ENCODE measurements at regions of chr1 and their contacts with region 1.

Region 1: GRCh38 chr1:110460253-110461220 is 9.6 kb downstream of the PROK1 start:
- DNase-seq: peak; percentile 83
- H3K4me3 ChIP-seq: peak overlapping the region in 1 of 2 experiments; percentile 26; a peak in 1 of 4 replicates
- H3K27ac ChIP-seq: no peak overlapping the region
- H3K4me1 ChIP-seq: 0 out of 4 replicates have a peak, but pooled peaks cover 0 to 6% of the 10 kb centered on the region in 2 experiments
- H3K27me3 ChIP-seq: no peaks in the 10 kb centered on the region
- CTCF ChIP-seq: peak; percentile 94
- EP300 ChIP-seq: no peak
- RAD21 ChIP-seq: peak; percentile 99

Region 2: DNA sequence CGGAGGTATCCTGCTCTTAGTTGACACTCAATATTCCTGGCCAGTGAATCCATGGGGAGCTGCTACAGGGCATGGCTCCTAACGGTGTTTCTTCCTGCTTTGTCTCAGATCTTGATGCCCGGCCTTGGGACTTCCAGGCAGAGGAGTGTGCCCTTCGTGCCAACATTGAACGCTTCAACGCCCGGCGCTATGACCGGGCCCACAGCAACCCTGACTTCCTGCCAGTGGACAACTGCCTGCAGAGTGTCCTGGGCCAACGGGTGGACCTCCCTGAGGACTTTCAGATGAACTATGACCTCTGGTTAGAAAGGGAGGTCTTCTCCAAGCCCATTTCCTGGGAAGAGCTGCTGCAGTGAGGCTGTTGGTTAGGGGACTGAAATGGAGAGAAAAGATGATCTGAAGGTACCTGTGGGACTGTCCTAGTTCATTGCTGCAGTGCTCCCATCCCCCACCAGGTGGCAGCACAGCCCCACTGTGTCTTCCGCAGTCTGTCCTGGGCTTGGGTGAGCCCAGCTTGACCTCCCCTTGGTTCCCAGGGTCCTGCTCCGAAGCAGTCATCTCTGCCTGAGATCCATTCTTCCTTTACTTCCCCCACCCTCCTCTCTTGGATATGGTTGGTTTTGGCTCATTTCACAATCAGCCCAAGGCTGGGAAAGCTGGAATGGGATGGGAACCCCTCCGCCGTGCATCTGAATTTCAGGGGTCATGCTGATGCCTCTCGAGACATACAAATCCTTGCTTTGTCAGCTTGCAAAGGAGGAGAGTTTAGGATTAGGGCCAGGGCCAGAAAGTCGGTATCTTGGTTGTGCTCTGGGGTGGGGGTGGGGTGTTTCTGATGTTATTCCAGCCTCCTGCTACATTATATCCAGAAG is 406.7 kb before region 1 on chr1:
- CTCF ChIA-PET with region 1: interaction called, 17 read pairs
- POLR2A ChIA-PET with region 1: no interaction called
- DNase-seq: peak; percentile 71
- H3K4me3 ChIP-seq: no peak overlapping the region; a peak in 1 of 4 replicates
- H3K27ac ChIP-seq: peak overlapping the region in 1 of 2 experiments; percentile 93; a peak in 2 of 4 replicates
- H3K4me1 ChIP-seq: peaks cover 60 to 79% of the 10 kb centered on the region in 2 experiments
- H3K27me3 ChIP-seq: no peaks in the 10 kb centered on the region
- CTCF ChIP-seq: peak; percentile 96
- EP300 ChIP-seq: no peak
- RAD21 ChIP-seq: peak; percentile 98

Region 3: DNA sequence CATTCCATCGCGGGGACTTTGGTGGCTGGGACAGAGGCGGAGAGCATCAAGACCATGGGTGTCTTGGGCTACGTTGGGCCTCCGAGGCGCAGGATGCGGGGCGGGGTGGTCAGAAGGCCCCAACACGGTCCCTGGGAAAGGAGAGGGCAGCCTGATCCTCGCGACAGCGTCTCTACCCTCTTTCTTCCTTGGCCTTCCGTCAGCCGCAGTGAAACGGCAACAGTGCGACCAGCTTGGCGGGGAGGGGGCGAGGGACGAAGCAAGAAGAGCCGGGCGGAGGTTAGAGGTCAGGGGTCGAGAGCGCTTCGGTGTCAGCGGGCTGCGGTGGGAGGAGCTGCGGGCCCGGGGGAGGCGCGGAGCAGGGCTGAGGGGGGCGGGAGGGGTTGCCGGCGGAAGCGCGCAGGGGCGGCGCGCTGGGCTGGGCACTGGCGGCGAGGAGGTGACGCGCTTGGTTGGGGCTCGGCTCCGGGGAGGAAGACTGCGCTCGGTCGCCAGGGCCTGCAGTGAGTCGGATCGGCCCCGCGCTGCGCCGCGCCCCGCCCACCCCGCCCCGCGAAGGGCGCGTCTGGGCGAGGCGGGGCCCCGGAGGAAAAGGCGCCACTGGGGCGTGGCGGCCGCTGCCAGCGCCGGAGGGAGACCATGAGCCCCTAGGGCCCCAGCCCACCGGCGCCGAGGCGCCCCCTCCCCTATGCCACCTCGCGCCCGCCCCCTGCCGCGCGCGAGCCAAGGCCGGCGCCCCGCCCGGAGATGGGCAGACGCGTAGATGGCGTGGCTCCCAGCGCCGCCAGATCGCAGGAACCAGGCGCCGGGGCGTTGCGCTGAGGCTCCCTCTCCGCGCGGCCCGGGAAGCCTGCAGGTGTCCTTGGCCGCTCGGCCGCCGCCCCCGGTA is 250.6 kb before region 1 on chr1 and contains the start of gene KCNC4:
- CTCF ChIA-PET with region 1: interaction called, 139 read pairs
- POLR2A ChIA-PET with region 1: no interaction called
- DNase-seq: peak; percentile 88
- H3K4me3 ChIP-seq: peak within 1 kb of the TSS; percentile 54
- H3K27ac ChIP-seq: no peak within 1 kb of the TSS; a peak in 1 of 4 replicates
- H3K4me1 ChIP-seq: peaks cover 0 to 57% of the 10 kb centered on the region in 2 experiments; a peak in 2 of 4 replicates
- H3K27me3 ChIP-seq: peaks cover 23% of the 10 kb centered on the region
- CTCF ChIP-seq: no peak
- EP300 ChIP-seq: no peak
- RAD21 ChIP-seq: no peak
- polyA plus RNA-seq, gene KCNC4: 0.37 and 0.51 TPM in 2 replicates

Region 4: GRCh38 chr1:110338886-110339406 is 121.6 kb before region 1 on chr1 and contains the start of gene RBM15:
- CTCF ChIA-PET with region 1: interaction called, 14 read pairs
- POLR2A ChIA-PET with region 1: no interaction called
- DNase-seq: peak; percentile 94
- H3K4me3 ChIP-seq: peak within 1 kb of the TSS; percentile 94 to 99
- H3K27ac ChIP-seq: peak within 1 kb of the TSS; percentile 98 to 99
- H3K4me1 ChIP-seq: peaks cover 29 to 44% of the 10 kb centered on the region in 2 experiments
- H3K27me3 ChIP-seq: no peaks in the 10 kb centered on the region
- CTCF ChIP-seq: no peak
- EP300 ChIP-seq: no peak; a peak in 1 of 4 replicates
- RAD21 ChIP-seq: no peak
- polyA plus RNA-seq, gene RBM15: 3.8 and 4.7 TPM in 2 replicates

Region 5: DNA sequence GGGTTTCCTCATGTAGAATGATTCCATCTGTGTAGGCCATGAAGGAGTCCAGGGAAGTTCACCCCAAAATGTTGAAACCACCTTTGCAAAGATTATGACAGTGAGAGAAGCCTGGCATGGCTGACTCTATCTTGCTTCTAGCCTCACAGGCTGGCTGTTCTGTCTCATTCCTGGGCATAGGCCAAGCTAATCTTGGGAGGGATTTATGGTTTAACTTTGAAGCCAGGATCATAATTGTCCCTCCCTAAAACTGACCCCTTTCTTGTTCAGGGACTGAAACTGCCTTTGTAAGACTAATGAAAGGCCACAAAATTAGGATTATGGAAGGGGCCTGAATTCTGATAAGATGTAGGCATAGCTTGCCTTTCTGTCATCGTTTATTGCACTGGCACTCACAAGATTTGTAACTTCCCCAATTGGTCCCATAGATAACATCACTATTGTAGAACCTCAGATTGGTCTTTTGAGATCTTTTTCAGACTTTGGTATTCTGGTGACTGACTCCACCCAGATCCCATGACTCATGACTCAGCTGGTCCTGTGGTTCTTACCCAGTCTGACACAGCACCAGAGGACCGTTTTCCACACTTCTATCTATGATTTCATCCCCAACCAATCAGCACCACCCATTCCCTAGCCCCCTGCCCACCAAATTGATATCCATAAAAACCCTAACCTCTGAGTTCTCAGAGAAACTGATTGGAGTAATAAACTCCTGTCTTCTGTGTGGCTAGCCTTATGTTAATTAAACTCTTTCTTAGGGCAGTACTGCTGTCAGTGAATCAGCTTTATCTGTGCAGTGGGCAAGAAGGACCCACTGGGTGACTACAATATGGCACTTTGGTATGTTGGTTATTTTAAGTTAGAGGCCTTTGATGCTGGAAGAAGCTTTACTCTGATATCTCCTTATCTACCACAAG is 39.4 kb before region 1 on chr1:
- CTCF ChIA-PET with region 1: interaction called, 250 read pairs
- POLR2A ChIA-PET with region 1: no interaction called
- DNase-seq: no peak
- H3K4me3 ChIP-seq: no peak overlapping the region
- H3K27ac ChIP-seq: no peak overlapping the region
- H3K4me1 ChIP-seq: no peaks in the 10 kb centered on the region; a peak in 1 of 4 replicates
- H3K27me3 ChIP-seq: no peaks in the 10 kb centered on the region
- CTCF ChIP-seq: no peak
- EP300 ChIP-seq: no peak
- RAD21 ChIP-seq: no peak

Region 6: GRCh38 chr1:110449661-110450651 is 10.6 kb before region 1 on chr1:
- CTCF ChIA-PET with region 1: interaction called, 33 read pairs
- POLR2A ChIA-PET with region 1: no interaction called
- DNase-seq: no peak
- H3K4me3 ChIP-seq: no peak overlapping the region
- H3K27ac ChIP-seq: no peak overlapping the region
- H3K4me1 ChIP-seq: no peaks in the 10 kb centered on the region
- H3K27me3 ChIP-seq: peaks cover 52% of the 10 kb centered on the region
- CTCF ChIP-seq: no peak
- EP300 ChIP-seq: no peak
- RAD21 ChIP-seq: no peak

Region 7: GRCh38 chr1:110490791-110491451 is 30.4 kb after region 1 on chr1:
- CTCF ChIA-PET with region 1: interaction called, 85 read pairs
- POLR2A ChIA-PET with region 1: no interaction called
- DNase-seq: no peak
- H3K4me3 ChIP-seq: no peak overlapping the region
- H3K27ac ChIP-seq: no peak overlapping the region
- H3K4me1 ChIP-seq: no peaks in the 10 kb centered on the region
- H3K27me3 ChIP-seq: no peaks in the 10 kb centered on the region
- CTCF ChIP-seq: no peak
- EP300 ChIP-seq: no peak
- RAD21 ChIP-seq: no peak

Measured in SK-N-SH (cell line).